ENCODE measurements at regions of chr6 and their contacts with region 1.

Region 1: GRCh38 chr6:150334790-150335783 is 33.7 kb upstream of the IYD start:
- DNase-seq: no peak

Region 2: DNA sequence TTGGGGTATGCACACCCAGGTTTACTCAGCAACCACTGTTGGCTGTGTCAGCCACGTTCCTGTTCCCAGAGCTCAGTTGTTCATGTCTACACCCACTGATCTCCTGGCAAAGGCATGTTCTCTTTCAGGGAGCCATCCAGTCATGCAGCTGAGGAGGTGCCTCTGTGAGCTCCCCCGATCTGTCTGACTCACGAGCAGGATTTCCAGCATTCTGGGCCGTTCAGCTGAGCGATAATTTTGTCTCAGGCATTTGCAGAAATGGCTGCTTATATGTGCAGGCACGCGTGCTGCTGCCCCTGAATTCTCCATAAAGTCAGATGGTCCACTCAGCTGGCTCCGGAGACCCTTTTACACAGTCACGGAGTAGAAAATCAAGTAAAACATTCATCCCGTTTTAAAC is 44.7 kb before region 1 on chr6:
- intact Hi-C with region 1: loop called in 1 of 2 experiments (anchors 2 kb)
- DNase-seq: no peak